Naive thymus-derived CD4-positive, alpha-beta T cell (primary cell): ENCODE measurements at regions of chr12 and their contacts with region 1.

Region 1: GRCh38 chr12:121443193-121443870 is 43.4 kb downstream of the RNF34 start:
- DNase-seq: peak; percentile 25 to 76 (median 50)
- ATAC-seq: peak; percentile 88
- H3K4me3 ChIP-seq: no peak overlapping the region
- H3K4me3 Mint-ChIP-seq: no peak overlapping the region
- H3K27ac ChIP-seq: no peak overlapping the region
- H3K27ac Mint-ChIP-seq: peak overlapping the region in 5 of 9 donors; percentile 48 to 76 (median 71)
- H3K4me1 ChIP-seq: no peaks in the 10 kb centered on the region
- H3K4me1 Mint-ChIP-seq: peaks cover 0 to 10% (median 0%) of the 10 kb centered on the region in 7 donors
- H3K27me3 ChIP-seq: no peaks in the 10 kb centered on the region
- H3K27me3 Mint-ChIP-seq: no peaks in the 10 kb centered on the region

Region 2: DNA sequence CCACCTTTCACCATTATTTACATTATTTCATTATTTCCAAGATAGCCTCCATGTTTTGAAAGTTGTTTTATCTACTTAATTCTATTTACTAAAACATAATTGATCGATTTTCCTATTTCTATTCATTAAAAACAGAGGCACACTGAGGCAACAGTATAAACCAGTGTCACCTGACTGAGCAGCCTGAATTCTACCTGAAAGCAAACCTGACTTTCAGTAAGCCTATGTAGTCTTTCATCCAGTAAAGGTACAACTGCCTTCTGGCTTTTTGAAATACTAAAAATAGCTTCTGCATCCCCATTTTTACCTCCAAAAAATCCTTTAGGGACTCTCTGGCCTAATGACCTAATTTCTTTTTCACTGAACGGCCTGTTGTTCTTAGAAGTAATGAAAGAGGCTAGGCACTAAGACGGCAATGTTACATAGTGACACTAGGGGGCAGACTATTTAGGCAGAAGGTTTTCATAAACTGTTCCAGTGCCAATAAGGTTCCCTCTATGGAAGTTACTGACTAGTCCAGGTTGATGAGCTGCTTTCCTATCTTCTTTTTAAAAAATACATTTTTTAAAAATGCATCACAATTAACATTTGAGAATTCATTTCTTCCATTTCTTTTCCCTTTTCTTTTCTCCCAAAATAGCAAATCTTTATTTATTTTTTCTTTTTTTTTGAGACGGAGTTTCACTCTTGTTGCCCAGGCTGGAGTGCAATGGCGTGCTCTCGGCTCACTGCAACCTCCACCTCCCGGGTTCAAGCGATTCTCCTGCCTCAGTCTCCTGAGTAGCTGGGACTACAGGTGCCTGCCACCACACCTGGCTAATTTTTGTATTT is 108.6 kb before region 1 on chr12:
- CTCF ChIA-PET with region 1: interaction called, 28 read pairs
- POLR2A ChIA-PET with region 1: interaction called, 4 read pairs
- intact Hi-C with region 1: loop called (anchors 1 kb)
- DNase-seq: peak in 8 of 9 donors; percentile 15 to 57 (median 46)
- ATAC-seq: peak; percentile 92
- H3K4me3 ChIP-seq: no peak overlapping the region
- H3K4me3 Mint-ChIP-seq: no peak overlapping the region
- H3K27ac ChIP-seq: no peak overlapping the region
- H3K27ac Mint-ChIP-seq: peak overlapping the region in 2 of 9 donors; percentile 14 to 76
- H3K4me1 ChIP-seq: peaks cover 0 to 3% of the 10 kb centered on the region in 2 donors
- H3K4me1 Mint-ChIP-seq: peaks cover 0 to 7% (median 5%) of the 10 kb centered on the region in 7 donors
- H3K27me3 ChIP-seq: no peaks in the 10 kb centered on the region
- H3K27me3 Mint-ChIP-seq: no peaks in the 10 kb centered on the region

Region 3: DNA sequence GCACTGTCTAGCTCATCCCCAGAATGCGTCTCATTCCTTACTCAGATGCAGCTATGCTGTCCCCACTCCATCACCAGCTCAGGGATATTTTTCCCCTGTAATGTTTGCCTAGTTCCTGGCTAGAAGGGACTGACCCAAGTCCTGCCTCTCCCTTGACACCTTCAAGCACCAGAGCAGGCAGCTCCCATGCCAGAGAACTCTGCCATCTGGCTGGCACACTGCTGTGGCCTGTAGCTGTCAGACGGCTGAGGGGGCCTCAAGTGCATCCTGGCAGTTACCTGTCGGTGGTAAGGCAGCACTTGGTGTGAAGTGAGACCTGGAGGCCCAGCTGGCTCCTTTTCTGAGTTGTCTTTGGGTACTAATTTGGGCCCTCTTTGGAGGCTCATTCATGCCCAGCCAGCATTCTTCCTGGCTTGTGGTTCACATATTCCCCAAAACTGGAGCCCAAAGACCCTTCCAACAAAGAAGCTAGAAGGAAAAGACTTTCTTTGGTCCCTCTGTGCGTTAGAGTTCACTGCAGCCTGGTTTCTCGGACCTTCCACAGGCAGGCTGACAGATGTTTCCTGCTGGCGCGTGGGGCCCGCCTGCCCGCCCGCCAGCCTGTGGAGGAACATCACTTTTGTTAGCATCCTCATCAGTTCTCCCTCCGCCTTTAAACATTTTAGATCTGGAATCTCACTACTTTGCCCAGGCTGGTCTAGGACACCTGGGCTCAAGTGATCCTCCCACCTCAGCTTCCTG is 10.4 kb before region 1 on chr12:
- CTCF ChIA-PET with region 1: interaction called, 10 read pairs
- POLR2A ChIA-PET with region 1: no interaction called
- intact Hi-C with region 1: no loop called
- DNase-seq: no peak
- ATAC-seq: no peak
- H3K4me3 ChIP-seq: no peak overlapping the region
- H3K4me3 Mint-ChIP-seq: no peak overlapping the region
- H3K27ac ChIP-seq: peak overlapping the region; percentile 38
- H3K27ac Mint-ChIP-seq: peak overlapping the region in 8 of 9 donors; percentile 14 to 84 (median 72)
- H3K4me1 ChIP-seq: no peaks in the 10 kb centered on the region
- H3K4me1 Mint-ChIP-seq: peaks cover 0 to 12% (median 0%) of the 10 kb centered on the region in 7 donors
- H3K27me3 ChIP-seq: no peaks in the 10 kb centered on the region
- H3K27me3 Mint-ChIP-seq: no peaks in the 10 kb centered on the region